ENCODE measurements at regions of chr3 and their contacts with region 1.

Region 1: DNA sequence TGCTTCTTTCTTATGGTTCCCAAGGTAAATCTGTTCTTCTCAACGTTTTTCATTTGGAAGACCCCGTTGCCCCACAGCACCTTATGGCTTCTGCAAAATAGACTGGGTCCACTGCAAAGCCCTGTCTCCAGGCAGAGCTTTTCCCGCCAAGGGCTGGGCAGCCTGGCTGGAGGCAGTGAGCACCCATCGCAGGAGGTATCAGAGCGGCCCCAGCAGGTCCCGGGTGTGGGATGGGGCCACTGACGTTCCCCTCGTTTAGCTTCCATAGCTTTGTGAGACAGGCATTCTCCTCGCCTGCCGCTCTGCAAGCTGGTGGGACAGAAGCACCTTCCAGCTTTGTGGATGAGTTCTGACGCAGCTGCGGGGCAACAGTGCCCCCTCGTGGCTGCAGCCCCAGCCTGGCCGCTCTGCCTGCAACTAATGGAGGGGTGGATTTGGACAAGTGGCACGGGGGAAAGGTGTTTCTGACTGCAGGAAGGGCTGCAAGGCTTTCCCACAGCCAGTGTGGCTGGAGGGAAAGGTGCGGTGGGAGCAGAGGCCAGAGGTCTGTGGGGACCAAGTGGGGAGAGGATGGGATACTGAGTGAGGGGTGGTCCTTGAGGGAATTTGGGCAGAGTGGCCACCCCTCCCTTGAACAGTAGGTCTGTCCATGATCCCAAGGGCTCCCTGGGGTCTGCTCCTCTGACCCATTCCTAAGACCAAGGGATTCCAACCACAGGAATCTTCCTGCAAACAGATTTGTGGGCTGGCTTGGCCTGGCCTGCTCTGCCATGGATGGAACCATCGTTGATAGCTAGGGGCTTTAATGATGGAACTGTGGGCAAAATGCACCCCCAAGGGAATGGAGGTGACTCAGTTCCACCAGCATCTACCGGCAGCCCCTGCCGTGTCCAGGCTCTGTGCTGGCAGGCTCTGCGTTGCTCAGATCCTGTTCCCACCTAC is 99.4 kb downstream of the FBLN2 start:
- DNase-seq: peak; percentile 90
- CTCF ChIP-seq: peak; percentile 91

Region 2: DNA sequence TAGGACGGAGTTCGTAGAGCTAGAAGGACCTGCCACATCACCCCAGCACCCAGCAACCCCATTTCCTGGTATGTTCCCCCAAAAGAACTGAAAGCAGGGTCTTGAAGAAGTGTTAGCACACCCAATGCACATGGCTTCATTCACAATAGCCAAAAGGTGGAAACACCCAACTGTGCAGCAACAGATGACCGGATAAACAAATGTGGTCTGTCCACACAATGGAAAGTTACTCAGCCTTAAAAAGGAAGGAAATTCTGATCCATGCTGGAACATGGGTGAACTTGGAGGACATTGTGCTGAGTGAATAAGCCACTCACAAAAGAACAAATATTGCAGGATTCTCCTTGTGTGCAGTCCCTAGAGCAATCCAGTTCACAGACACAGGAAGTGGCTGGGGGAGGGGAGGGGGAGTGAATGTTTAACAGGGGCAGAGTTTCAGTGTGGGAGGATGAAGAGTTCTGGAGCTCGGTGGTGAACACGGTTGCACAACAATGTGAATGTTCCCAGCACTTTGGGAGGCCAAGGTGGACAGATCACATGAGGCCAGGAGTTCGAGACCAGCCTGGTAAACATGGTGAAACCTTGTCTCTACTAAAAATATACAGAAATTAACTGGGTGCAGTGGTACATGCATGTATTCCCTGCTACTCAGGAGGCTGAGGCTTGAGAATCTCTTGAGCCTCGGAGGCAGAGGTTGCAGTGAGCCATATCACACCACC is 385.7 kb before region 1 on chr3:
- in situ Hi-C with region 1: no loop called
- DNase-seq: no peak
- CTCF ChIP-seq: no peak

Region 3: GRCh38 chr3:13500133-13500885 is 148.0 kb before region 1 on chr3:
- in situ Hi-C with region 1: loop called (anchors 5 kb)
- DNase-seq: peak; percentile 76
- CTCF ChIP-seq: peak; percentile 41

Region 4: GRCh38 chr3:13812034-13812471 is 163.7 kb after region 1 on chr3:
- in situ Hi-C with region 1: no loop called
- DNase-seq: no peak
- CTCF ChIP-seq: no peak

Region 5: DNA sequence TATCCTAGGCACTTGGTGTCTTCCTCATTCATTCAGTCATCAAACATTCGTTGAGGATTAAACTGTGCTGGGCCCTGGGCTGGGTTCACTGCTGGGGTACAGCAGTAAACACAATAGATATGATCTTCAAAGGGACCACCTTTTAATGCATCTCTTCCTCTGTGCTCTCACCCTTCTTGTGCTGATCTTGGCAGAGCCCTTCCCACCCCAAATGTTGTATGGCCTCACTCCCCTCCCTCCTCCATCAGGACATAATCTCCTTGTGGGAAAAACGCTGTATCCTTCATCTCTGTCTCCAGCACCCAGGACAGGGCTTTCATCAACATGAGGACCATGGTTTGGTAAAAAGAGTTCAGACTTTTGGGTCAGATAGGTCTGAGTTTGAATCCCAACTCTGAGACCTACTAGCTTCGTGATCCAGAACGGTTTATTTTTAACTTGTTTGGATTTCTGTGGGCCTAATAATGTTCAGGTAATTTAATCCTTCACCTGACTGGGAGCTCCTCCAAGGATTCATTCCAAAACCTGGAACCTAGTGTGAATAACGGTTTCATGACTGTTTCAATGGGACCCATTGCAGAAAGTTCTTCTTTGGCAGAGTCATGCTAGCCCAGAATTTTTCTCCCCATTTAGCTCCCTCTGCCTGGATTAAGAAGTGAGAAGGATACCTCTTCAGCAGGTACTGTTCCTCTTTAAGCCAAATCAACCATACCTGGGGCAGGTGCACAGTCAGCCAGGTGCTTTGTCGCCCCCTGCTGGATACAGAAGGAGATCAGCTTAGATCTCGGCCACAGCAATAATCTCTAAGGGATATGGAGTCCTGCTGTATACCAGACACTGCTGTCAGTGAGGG is 236.7 kb after region 1 on chr3:
- in situ Hi-C with region 1: loop called (anchors 10 kb)
- DNase-seq: peak; percentile 76
- CTCF ChIP-seq: peak; percentile 58

Region 6: GRCh38 chr3:13932578-13933295 is 284.4 kb after region 1 on chr3:
- in situ Hi-C with region 1: no loop called
- DNase-seq: no peak
- CTCF ChIP-seq: no peak

Region 7: DNA sequence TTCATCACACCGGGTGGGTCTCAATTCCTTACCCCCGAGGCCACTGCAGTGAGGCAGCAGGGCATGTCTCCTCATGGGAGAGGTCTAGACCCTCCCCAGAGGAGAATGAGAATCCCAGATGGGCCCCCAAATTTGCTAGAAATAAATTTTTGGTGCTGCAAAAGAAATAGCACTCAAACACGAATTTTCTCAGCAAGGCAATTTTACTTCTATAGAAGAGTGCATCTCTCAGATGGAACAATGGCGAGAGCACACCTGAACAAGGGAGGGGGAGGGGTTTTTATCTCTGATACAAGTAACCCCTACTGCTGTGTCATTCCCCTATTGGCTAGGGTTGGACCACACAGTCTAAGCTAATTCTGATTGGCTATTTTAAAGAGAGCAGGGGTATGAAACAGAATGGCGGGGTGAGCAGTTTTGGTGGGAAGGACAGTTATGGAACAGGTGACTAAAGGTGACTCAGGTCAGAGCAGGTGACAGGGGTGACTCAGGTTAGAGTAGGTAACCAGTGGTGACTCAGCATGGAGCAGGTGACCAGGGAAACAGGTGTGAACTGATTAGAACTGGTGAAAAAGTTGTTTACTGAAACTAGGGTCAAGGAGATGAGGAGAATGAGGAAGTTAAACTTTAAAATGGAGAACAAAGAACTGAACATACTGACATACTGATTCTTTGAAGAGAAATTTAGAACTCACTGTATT is 324.5 kb after region 1 on chr3:
- in situ Hi-C with region 1: no loop called
- DNase-seq: no peak
- CTCF ChIP-seq: no peak

Measured in GM13976 (cell line).